ENCODE measurements at regions of chr17 and their contacts with region 1.

Region 1: GRCh38 chr17:74176546-74177001 is 26.9 kb upstream of the RPL38 start:
- DNase-seq: peak; percentile 74 to 76
- ATAC-seq: peak; percentile 88 to 96
- H3K4me3 ChIP-seq: no peak overlapping the region
- H3K27ac ChIP-seq: no peak overlapping the region
- H3K4me1 ChIP-seq: no peaks in the 10 kb centered on the region
- CTCF ChIP-seq: peak; percentile 95
- EP300 ChIP-seq: no peak
- POLR2A ChIP-seq: no peak
- RAD21 ChIP-seq: peak; percentile 97 to 98

Region 2: GRCh38 chr17:73998653-73999645 is 177.6 kb before region 1 on chr17:
- CTCF ChIA-PET with region 1: interaction called, 14 read pairs
- POLR2A ChIA-PET with region 1: no interaction called
- DNase-seq: peak; percentile 49 to 85
- ATAC-seq: peak; percentile 90 to 98
- H3K4me3 ChIP-seq: no peak overlapping the region
- H3K27ac ChIP-seq: no peak overlapping the region
- H3K4me1 ChIP-seq: no peaks in the 10 kb centered on the region
- CTCF ChIP-seq: peak; percentile 66
- EP300 ChIP-seq: no peak
- POLR2A ChIP-seq: no peak
- RAD21 ChIP-seq: peak; percentile 67 to 75

Region 3: GRCh38 chr17:74089869-74090464 is 86.6 kb before region 1 on chr17:
- CTCF ChIA-PET with region 1: interaction called, 12 read pairs
- POLR2A ChIA-PET with region 1: no interaction called
- DNase-seq: peak; percentile 52 to 79
- ATAC-seq: peak; percentile 52 to 90; a peak in 4 of 6 replicates
- H3K4me3 ChIP-seq: no peak overlapping the region
- H3K27ac ChIP-seq: no peak overlapping the region
- H3K4me1 ChIP-seq: no peaks in the 10 kb centered on the region
- CTCF ChIP-seq: peak; percentile 70
- EP300 ChIP-seq: no peak
- POLR2A ChIP-seq: no peak
- RAD21 ChIP-seq: peak; percentile 66 to 81

Region 4: DNA sequence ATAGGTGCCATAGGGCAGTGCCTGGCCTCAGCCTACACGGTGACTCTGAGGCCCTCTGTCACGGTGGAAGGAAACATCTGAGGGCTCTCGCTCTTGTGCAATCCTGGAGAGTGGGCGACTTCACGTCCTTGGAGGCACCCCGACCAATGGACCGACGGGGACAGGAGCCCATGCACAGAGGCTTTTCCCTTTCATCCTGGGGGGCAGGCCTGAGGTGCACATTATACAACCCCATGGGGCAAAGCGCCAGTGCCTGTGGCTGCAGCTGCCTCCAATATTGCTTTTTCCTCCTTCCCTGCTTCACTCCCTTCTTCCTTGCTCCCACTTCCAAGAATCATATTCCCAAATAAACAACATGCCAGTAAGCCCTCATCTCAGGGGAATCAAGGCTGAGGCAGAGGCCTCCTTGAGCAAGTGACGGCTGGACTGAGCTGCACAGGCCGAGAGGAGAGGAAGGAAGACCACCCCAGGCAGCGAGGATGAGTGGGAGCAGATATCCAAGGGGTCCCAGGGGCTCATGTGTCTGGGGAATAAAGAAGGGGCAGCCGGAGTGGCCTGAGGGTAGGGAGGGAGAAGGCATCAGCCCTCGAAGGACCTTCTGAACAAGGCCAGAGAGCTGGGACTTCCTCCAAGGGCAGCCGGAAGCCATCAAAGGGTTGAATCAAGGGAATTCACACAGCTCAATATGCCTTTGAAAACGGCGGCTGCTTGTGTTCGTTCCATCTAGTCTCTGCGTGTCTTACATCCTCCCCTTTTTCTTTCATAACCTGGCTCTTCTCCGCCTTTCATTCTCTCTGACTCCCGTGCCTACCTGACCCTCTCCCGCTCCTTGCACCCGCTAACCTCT is 15.7 kb before region 1 on chr17:
- CTCF ChIA-PET with region 1: interaction called, 25 read pairs
- POLR2A ChIA-PET with region 1: no interaction called
- DNase-seq: no peak
- ATAC-seq: no peak
- H3K4me3 ChIP-seq: no peak overlapping the region
- H3K27ac ChIP-seq: no peak overlapping the region
- H3K4me1 ChIP-seq: no peaks in the 10 kb centered on the region
- CTCF ChIP-seq: no peak
- EP300 ChIP-seq: no peak
- POLR2A ChIP-seq: no peak
- RAD21 ChIP-seq: no peak

Region 5: DNA sequence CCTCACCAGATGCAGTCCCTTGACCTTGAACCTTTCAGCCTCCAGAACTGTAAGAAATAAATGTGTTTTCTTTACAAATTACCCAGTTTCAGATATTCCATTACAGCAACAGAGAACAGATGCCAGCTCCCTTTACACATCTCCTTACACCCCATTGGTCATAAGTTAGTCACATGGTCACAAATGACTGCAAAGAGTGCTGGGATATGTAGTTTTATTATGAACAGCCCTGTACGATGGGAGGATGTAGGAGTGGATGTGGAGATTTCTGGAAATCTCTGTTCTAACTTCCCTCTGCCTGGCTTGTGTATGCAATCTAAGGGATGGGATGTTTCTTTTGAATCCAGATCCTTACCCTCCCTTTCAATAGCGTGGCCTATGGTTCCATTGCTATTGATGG is 13.6 kb after region 1 on chr17:
- CTCF ChIA-PET with region 1: interaction called, 57 read pairs
- POLR2A ChIA-PET with region 1: no interaction called
- DNase-seq: peak; percentile 73 to 89
- ATAC-seq: peak; percentile 71 to 90; a peak in 5 of 6 replicates
- H3K4me3 ChIP-seq: no peak overlapping the region
- H3K27ac ChIP-seq: no peak overlapping the region; a peak in 1 of 6 replicates
- H3K4me1 ChIP-seq: peaks cover 30% of the 10 kb centered on the region
- CTCF ChIP-seq: no peak
- EP300 ChIP-seq: no peak
- POLR2A ChIP-seq: no peak
- RAD21 ChIP-seq: no peak

Region 6: GRCh38 chr17:74245145-74245831 is 68.7 kb after region 1 on chr17:
- CTCF ChIA-PET with region 1: no interaction called
- POLR2A ChIA-PET with region 1: no interaction called
- DNase-seq: no peak
- ATAC-seq: peak; percentile 6 to 39; a peak in 3 of 6 replicates
- H3K4me3 ChIP-seq: no peak overlapping the region
- H3K27ac ChIP-seq: no peak overlapping the region
- H3K4me1 ChIP-seq: no peaks in the 10 kb centered on the region
- CTCF ChIP-seq: no peak
- EP300 ChIP-seq: no peak
- POLR2A ChIP-seq: no peak
- RAD21 ChIP-seq: no peak